Ascending aorta (tissue), 2 donors: ENCODE measurements at regions of chr6 and their contacts with region 1.

Region 1: GRCh38 chr6:153131037-153131981 is at the start of gene RGS17:
- DNase-seq: peak in 1 of 2 donors; percentile 83
- H3K4me3 ChIP-seq: peak within 1 kb of the TSS; percentile 61 to 80
- H3K27ac ChIP-seq: peak within 1 kb of the TSS; percentile 78 to 83
- H3K4me1 ChIP-seq: peaks cover 3 to 5% of the 10 kb centered on the region in 2 donors
- H3K27me3 ChIP-seq: no peaks in the 10 kb centered on the region
- CTCF ChIP-seq: no peak
- total RNA-seq, gene RGS17: not detected

Region 2: GRCh38 chr6:153108315-153108714 is 23.0 kb before region 1 on chr6:
- intact Hi-C with region 1: loop called (anchors 2 kb)
- DNase-seq: no peak
- H3K4me3 ChIP-seq: no peak overlapping the region
- H3K27ac ChIP-seq: no peak overlapping the region
- H3K4me1 ChIP-seq: peaks cover 0 to 18% of the 10 kb centered on the region in 2 donors
- H3K27me3 ChIP-seq: no peaks in the 10 kb centered on the region
- CTCF ChIP-seq: peak; percentile 10 to 68 (median 46)

Region 3: DNA sequence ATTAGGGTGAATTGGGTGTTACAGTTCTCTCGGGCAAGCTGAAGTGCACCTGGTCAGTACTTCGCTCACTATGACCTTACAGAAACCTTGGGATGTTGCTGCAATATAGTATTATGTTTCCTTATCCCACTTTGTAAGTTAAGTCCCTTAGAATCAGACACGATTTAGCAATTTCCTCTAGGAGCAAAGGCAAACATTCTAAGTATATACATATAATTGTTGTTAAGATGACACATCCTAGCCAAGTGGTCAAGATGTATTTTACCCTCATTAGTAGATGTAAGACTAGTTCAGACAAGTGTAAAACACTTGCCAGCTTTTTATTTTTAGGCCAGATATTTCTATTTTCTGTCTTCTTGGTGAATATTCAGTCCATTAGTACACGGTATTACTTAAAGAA is 30.9 kb after region 1 on chr6:
- intact Hi-C with region 1: no loop called
- DNase-seq: no peak
- H3K4me3 ChIP-seq: no peak overlapping the region
- H3K27ac ChIP-seq: no peak overlapping the region
- H3K4me1 ChIP-seq: no peaks in the 10 kb centered on the region
- H3K27me3 ChIP-seq: no peaks in the 10 kb centered on the region
- CTCF ChIP-seq: no peak

Region 4: GRCh38 chr6:153215242-153215641 is 83.9 kb after region 1 on chr6:
- intact Hi-C with region 1: loop called (anchors 5 kb)
- DNase-seq: no peak
- H3K4me3 ChIP-seq: no peak overlapping the region
- H3K27ac ChIP-seq: no peak overlapping the region
- H3K4me1 ChIP-seq: peaks cover 0 to 8% of the 10 kb centered on the region in 2 donors
- H3K27me3 ChIP-seq: no peaks in the 10 kb centered on the region
- CTCF ChIP-seq: no peak

Region 5: GRCh38 chr6:154754152-154754551 is 1622.8 kb after region 1 on chr6:
- intact Hi-C with region 1: no loop called
- DNase-seq: no peak
- H3K4me3 ChIP-seq: no peak overlapping the region
- H3K27ac ChIP-seq: peak overlapping the region; percentile 46 to 50
- H3K4me1 ChIP-seq: peaks cover 0 to 14% of the 10 kb centered on the region in 2 donors
- H3K27me3 ChIP-seq: no peaks in the 10 kb centered on the region
- CTCF ChIP-seq: no peak